GM12878 (cell line): ENCODE measurements at regions of chr2 and their contacts with region 1.

Region 1: DNA sequence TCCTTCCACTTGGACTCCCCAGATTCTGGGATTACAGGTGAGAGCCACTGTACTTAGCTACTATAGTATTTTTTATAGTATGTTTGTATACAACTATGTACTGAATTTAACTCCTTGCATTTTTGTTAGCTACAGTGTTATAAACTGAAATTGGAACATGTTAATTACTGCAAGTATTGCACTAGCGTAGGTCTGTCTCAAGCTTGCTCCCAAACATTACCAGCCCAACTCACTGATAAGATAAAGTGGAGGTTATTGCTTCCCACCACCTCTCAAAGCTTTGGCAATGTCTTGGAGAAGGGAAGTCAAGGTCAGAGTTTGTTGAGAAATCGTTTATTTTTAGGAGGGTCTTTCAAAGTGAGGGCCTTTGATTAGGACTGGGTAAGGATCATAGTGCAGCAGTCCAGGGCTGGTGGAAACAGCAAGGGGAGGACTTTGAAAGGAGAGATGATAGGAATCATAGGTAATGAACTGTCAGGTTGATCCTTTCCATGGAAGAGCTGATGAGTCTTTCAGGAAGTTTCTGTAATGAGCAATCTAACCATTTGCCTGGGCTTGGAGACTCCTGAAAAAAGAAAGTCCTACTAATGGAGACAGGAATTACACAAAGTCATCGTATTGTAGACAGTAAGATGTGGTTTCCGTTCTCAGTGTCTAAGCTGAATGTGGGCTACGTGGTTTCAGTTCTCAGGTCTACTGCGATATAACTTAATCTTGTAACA is 257.1 kb downstream of the MYO3B start:
- DNase-seq: peak; percentile 51
- ATAC-seq: peak; percentile 94
- H3K4me3 ChIP-seq: no peak overlapping the region
- H3K27ac ChIP-seq: no peak overlapping the region
- H3K4me1 ChIP-seq: peaks cover 6% of the 10 kb centered on the region; the same call in 1 of the 2 replicates
- H3K27me3 ChIP-seq: no peaks in the 10 kb centered on the region
- CTCF ChIP-seq: no peak
- EP300 ChIP-seq: no peak
- POLR2A ChIP-seq: no peak
- RAD21 ChIP-seq: no peak

Region 2: GRCh38 chr2:170396799-170397459 is 38.1 kb before region 1 on chr2:
- CTCF ChIA-PET with region 1: no interaction called
- POLR2A ChIA-PET with region 1: interaction called, 10 read pairs
- RAD21 ChIA-PET with region 1: no interaction called
- SMC1A ChIA-PET with region 1: interaction called, 5 read pairs
- in situ Hi-C with region 1: no loop called
- intact Hi-C with region 1: no loop called
- DNase-seq: no peak
- ATAC-seq: peak; percentile 71
- H3K4me3 ChIP-seq: no peak overlapping the region
- H3K27ac ChIP-seq: no peak overlapping the region
- H3K4me1 ChIP-seq: no peaks in the 10 kb centered on the region; the same call in 1 of the 2 replicates
- H3K27me3 ChIP-seq: no peaks in the 10 kb centered on the region
- CTCF ChIP-seq: peak; percentile 27 to 51 (median 46); a peak in 3 of 6 replicates
- EP300 ChIP-seq: no peak
- POLR2A ChIP-seq: no peak
- RAD21 ChIP-seq: peak; percentile 47

Region 3: DNA sequence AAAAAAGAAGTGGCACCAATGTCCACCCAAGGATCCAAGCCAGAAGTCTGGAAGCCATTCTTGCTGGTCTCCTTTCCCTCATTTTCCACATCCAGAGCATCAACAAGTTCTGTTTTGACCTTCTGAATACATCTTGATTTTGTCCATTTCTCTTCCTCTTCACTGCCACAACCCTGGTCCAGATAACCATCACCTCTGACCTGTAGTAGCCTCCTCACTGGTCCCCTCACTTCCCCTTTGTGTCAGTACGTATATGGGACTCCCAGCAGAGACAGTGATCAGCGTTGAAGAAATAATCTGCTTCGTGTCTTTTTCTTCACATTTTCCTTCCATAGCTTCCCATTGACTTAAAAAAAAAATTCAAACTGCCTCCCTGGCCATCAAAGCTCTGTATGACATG is 170.8 kb after region 1 on chr2:
- CTCF ChIA-PET with region 1: no interaction called
- POLR2A ChIA-PET with region 1: no interaction called
- RAD21 ChIA-PET with region 1: no interaction called
- SMC1A ChIA-PET with region 1: no interaction called
- in situ Hi-C with region 1: no loop called
- intact Hi-C with region 1: no loop called
- DNase-seq: no peak
- ATAC-seq: no peak
- H3K4me3 ChIP-seq: no peak overlapping the region
- H3K27ac ChIP-seq: no peak overlapping the region
- H3K4me1 ChIP-seq: no peaks in the 10 kb centered on the region
- H3K27me3 ChIP-seq: no peaks in the 10 kb centered on the region
- CTCF ChIP-seq: no peak
- EP300 ChIP-seq: no peak
- POLR2A ChIP-seq: no peak
- RAD21 ChIP-seq: no peak